Common myeloid progenitor, CD34-positive (primary cell): ENCODE measurements at regions of chr4 and their contacts with region 1.

Region 1: DNA sequence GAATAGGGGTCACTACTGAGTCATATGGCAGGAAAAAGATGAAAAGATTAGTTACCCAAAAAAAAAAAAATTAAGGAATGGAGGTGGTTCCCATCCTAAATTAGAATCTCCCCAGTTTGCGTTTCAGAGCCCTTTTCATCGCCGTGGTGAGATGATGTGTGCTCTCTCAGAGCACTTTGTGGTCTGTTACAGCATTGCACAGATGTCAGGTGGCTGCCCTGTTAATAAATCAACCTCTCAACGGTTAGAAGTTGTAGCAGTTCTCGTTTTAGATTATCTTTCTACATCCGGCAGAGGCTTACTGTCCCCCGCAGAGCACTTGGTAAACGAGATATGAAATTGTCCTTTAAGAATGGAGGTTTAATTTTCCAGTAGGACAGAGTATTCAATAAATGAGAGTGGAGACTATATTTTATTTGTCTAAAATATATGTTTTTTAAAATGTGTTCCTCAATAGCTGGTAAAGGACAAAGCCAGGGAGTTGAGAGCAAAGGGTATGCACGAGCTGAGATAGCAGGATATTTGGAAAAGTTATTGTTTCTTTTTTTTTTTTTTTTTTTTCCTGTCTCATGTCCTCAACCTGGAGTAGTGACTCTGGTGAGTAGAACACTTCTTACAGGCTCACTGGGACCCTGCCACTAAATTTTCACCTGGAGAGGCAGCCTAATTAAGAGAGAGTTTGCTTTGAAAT is 26.9 kb downstream of the AFF1 start:
- DNase-seq: peak; percentile 91 to 98 (median 96)
- H3K4me3 ChIP-seq: peak overlapping the region in 4 of 7 experiments; percentile 49 to 55 (median 52)
- H3K27ac ChIP-seq: peak overlapping the region; percentile 73 to 88
- H3K4me1 ChIP-seq: peaks cover 62 to 87% (median 75%) of the 10 kb centered on the region in 4 experiments
- H3K27me3 ChIP-seq: no peaks in the 10 kb centered on the region

Region 2: DNA sequence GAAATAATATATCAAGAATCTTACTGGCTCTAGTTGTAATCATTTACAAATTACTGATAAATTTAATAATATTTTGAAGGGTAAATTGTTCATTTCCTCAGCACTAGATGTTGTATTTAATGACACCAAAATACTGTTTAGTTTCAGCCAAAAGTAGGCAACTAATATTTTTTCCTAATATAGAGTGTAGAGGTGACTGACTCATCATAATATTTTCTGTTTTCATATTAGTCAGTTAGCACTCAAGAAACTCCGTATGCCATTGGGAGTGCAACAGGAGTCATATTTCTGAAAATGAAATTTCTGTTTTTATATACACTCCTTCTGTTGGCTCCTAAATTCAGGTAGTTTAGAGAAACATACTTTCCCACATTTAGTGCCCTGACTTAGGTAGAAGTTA is 404.2 kb before region 1 on chr4:
- CTCF ChIA-PET with region 1: no interaction called
- POLR2A ChIA-PET with region 1: no interaction called
- DNase-seq: no peak
- H3K4me3 ChIP-seq: no peak overlapping the region
- H3K27ac ChIP-seq: no peak overlapping the region
- H3K4me1 ChIP-seq: peaks cover 10 to 51% (median 24%) of the 10 kb centered on the region in 4 experiments
- H3K27me3 ChIP-seq: peaks cover 0 to 8% (median 0%) of the 10 kb centered on the region in 5 experiments

Region 3: DNA sequence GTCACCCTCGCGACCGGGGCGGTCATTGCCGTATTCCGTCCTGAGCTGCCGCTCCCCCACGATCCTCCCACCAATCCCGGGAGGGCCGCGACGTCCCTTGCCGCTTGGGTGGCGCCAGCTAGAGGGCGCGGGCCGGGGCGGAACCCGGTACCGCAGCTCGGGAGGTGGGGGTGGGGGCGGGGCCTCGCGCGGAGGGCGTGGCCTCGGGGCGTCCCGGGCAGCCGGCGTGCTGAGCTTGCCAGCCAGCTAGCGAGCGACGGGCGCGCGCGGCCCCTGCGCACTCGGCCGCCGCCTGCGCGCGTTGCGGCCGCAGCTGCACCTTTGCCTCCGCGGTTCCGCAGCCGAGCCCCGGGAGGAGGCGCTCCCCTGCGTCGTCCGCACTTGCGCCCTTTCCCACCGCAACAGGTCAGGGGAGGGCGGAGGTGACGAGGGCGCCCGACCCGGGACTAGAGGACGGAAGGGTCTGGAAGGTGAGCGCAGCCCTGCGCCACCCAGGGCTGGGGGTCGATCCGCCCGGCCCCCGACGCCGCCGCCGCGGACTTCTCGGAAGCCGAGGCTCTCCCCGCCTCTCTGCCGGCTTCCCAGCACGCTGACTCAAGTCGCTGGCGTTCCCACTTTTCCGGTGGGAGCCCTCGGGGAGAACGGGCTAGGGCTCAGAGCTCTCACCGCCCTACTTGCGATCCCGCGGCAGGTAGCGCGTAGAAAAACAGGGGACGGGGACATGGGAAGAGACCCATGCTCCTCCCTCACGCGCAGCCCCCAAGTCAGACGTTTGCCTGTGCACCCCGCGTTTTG is 26.8 kb before region 1 on chr4 and contains the start of gene AFF1:
- CTCF ChIA-PET with region 1: interaction called, 20 read pairs
- POLR2A ChIA-PET with region 1: interaction called, 8 read pairs
- DNase-seq: peak; percentile 98
- H3K4me3 ChIP-seq: peak within 1 kb of the TSS; percentile 79 to 97 (median 95)
- H3K27ac ChIP-seq: peak within 1 kb of the TSS; percentile 73 to 94
- H3K4me1 ChIP-seq: peaks cover 24 to 54% (median 41%) of the 10 kb centered on the region in 4 experiments
- H3K27me3 ChIP-seq: no peaks in the 10 kb centered on the region

Region 4: GRCh38 chr4:86947501-86948120 is 14.1 kb before region 1 on chr4:
- CTCF ChIA-PET with region 1: interaction called, 14 read pairs
- POLR2A ChIA-PET with region 1: no interaction called
- DNase-seq: peak in 2 of 3 donors; percentile 70 to 78
- H3K4me3 ChIP-seq: peak overlapping the region in 1 of 7 experiments; percentile 46
- H3K27ac ChIP-seq: no peak overlapping the region
- H3K4me1 ChIP-seq: peaks cover 24 to 53% (median 37%) of the 10 kb centered on the region in 4 experiments
- H3K27me3 ChIP-seq: no peaks in the 10 kb centered on the region

Region 5: DNA sequence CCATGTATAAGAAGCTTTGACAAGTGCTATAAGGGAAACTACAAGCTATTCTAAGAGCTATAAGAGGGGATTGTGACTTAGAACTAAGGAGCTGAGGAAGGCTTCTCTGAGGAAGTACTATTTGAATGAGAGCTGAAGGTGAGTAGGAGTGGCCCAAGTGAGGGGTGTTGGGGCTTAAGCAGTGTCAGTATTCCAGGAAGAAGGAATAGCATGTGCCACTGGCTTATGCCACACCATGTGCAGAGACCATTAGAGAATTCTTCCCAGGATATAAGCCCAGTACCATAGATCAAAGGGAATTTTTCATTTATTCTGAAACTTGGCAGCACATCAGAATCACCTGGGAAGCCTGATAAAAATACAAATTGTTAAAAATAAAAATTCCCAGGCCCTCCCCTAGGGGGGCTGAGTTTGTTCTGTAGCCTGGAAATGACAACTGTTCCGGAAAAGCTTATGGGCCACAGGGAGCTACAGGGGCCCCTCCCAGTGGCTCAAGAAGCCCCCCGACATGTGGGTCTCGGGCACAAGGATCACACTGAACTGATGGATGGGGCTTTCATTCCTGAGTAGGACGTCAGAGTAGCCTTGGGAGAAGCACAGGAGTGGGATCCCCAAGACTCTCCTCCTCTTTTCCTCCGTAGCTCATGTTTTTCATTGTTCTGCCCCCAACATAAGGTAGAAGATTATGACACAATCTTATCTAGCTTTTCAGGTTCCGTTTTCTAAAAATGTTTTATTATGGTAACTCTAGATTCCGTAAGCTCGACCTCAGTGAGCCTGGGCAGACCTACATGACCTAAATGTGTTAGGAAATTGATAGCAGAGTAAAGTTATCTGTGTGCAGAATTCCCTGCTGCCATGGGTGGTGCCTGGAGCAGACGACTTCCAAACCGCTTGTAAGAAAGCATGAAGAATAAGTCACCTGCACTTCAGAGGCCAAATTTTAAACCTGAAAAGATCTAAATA is 92.3 kb after region 1 on chr4:
- CTCF ChIA-PET with region 1: interaction called, 12 read pairs
- POLR2A ChIA-PET with region 1: no interaction called
- DNase-seq: peak; percentile 77 to 90 (median 84)
- H3K4me3 ChIP-seq: peak overlapping the region in 4 of 7 experiments; percentile 21 to 56 (median 44)
- H3K27ac ChIP-seq: peak overlapping the region; percentile 73 to 87
- H3K4me1 ChIP-seq: peaks cover 26 to 83% (median 60%) of the 10 kb centered on the region in 4 experiments
- H3K27me3 ChIP-seq: no peaks in the 10 kb centered on the region

Region 6: DNA sequence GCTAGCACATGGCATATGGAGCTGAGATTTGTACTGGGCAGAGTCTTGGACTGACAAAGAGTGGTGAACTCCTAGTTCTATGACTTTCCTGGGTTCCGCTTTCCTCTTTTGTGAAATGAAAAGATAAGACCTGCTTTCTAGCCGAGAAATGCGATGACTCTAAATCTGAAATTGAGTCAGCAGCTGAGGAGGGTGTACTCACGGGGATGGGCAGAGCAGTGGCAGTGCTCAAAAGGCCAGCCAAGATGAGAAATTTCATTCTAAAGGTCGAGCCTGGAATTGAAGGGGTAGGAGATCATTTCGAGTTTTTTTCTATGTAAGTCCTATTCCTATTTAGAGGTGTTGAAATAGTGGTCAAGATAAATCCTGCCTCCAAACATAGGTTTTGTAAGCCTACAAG is 507.6 kb after region 1 on chr4:
- CTCF ChIA-PET with region 1: no interaction called
- POLR2A ChIA-PET with region 1: no interaction called
- DNase-seq: no peak
- H3K4me3 ChIP-seq: no peak overlapping the region
- H3K27ac ChIP-seq: no peak overlapping the region
- H3K4me1 ChIP-seq: no peaks in the 10 kb centered on the region
- H3K27me3 ChIP-seq: no peaks in the 10 kb centered on the region